ENCODE measurements at regions of chr4 and their contacts with region 1.

Region 1: GRCh38 chr4:182764137-182764536 is 153.0 kb downstream of the DCTD start:
- DNase-seq: no peak

Region 2: DNA sequence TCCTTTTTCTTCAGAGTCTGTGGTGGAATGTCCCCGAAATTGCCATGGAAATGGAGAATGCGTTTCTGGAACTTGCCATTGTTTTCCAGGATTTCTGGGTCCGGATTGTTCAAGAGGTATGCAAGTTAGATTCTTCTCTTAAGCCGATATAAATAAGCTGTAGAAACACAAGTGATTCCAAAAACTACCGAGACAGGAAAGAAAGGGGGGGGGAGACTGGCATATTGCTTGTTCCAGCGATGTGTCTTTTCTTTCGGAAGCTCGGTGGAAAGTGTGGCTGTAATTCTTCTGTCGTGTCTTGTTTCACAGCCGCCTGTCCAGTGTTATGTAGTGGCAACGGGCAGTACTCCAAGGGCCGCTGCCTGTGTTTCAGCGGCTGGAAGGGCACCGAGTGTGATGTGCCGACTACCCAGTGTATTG is 83.9 kb before region 1 on chr4:
- intact Hi-C with region 1: loop called in 1 of 2 experiments (anchors 10 kb)
- DNase-seq: no peak

Measured in posterior vena cava (tissue), 2 donors.